Endothelial cell of umbilical vein (primary cell): ENCODE measurements at regions of chr5 and their contacts with region 1.

Region 1: DNA sequence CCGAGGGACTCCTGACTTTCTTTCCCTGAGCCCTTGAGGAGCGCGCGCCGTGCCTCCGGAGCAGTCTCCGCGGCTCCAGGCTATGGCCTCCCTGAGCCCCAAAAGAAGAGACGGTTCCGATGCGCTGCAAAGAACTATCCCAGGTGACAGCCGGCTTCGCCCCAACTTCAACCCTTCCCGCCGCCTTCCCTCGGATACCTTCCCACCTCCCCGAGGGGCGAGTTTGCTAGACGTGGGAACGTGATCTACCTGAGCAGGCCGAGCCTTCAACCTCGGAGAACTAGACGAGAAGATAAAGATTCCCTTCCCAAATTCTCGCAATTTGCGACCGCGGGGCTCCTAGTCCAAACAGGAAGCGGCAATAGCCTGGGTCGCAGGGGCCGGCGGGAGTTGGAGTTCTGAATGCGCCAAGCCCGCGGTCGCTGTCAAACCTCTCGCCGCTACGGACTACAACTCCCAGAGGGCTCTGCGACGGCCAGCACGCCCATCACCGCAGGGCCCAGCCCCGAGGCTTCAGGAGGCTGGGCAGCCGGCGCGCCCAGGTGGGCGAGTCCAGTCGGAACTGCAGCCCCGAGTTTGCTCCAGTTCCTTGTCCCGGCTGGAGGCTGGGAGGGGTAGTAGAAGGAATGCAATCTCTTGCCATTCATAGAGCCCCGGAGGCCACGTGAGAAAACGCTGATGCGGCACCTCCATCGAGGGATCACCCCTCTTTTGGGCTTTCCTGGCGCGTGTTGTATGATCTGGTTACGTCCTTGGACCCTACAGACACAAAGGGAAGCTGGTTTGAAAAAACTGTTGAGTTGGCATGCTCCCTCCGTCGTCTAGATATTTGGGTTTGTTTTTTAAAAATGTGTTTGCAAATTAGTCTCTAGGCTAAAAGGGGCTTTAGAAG is at the start of gene SLC38A9:
- DNase-seq: peak; percentile 93
- H3K4me3 ChIP-seq: peak within 1 kb of the TSS; percentile 66 to 81 (median 81)
- H3K27ac ChIP-seq: peak within 1 kb of the TSS; percentile 19
- H3K4me1 ChIP-seq: peaks cover 9% of the 10 kb centered on the region
- H3K27me3 ChIP-seq: no peaks in the 10 kb centered on the region
- CTCF ChIP-seq: no peak
- POLR2A ChIP-seq: peak; percentile 93
- total RNA-seq, gene SLC38A9: 24.9 and 29.0 TPM in 2 replicates

Region 2: GRCh38 chr5:54936201-54936600 is 776.0 kb before region 1 on chr5:
- CTCF ChIA-PET with region 1: no interaction called
- POLR2A ChIA-PET with region 1: no interaction called
- dilution Hi-C with region 1: no loop called
- intact Hi-C with region 1: no loop called
- DNase-seq: peak; percentile 46
- H3K4me3 ChIP-seq: no peak overlapping the region
- H3K27ac ChIP-seq: no peak overlapping the region
- H3K4me1 ChIP-seq: peaks cover 4% of the 10 kb centered on the region
- H3K27me3 ChIP-seq: peaks cover 14 to 17% of the 10 kb centered on the region in 2 experiments
- CTCF ChIP-seq: no peak
- POLR2A ChIP-seq: no peak

Region 3: DNA sequence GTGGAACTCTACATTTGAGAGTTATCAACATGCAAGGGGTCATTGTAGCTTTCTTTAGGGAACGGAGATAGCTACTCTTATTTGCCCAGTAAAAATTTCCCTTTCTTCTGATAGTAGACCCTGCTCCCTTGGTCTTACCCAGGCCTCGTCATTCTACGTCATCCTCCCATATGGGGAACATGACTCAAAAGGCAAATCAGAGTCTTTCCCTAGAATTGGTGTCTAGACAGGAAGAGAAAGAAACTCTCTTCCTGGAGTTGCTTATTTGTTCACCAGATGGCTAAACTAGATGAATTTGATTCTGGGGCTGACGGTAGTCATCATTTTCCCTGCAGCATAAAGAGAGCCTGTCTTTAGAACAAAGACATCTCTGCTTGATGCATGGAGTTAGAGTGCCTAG is 12.1 kb after region 1 on chr5:
- CTCF ChIA-PET with region 1: no interaction called
- POLR2A ChIA-PET with region 1: no interaction called
- dilution Hi-C with region 1: no loop called
- intact Hi-C with region 1: loop called (anchors 1 kb)
- DNase-seq: peak; percentile 60
- H3K4me3 ChIP-seq: no peak overlapping the region
- H3K27ac ChIP-seq: peak overlapping the region; percentile 12
- H3K4me1 ChIP-seq: no peaks in the 10 kb centered on the region
- H3K27me3 ChIP-seq: no peaks in the 10 kb centered on the region
- CTCF ChIP-seq: no peak
- POLR2A ChIP-seq: no peak